Activated CD4-positive, alpha-beta memory T cell treated with anti-CD3 and anti-CD28 coated beads for 36 hours (primary cell): ENCODE measurements at regions of chr11 and their contacts with region 1.

Region 1: GRCh38 chr11:2444821-2445745 is at the start of gene KCNQ1:
- DNase-seq: peak; percentile 52
- H3K4me3 Mint-ChIP-seq: peak within 1 kb of the TSS; percentile 89
- H3K27ac Mint-ChIP-seq: peak within 1 kb of the TSS; percentile 4
- H3K4me1 Mint-ChIP-seq: peaks cover 33% of the 10 kb centered on the region
- H3K27me3 Mint-ChIP-seq: no peaks in the 10 kb centered on the region
- total RNA-seq, gene KCNQ1: 10.7 to 10.8 TPM

Region 2: DNA sequence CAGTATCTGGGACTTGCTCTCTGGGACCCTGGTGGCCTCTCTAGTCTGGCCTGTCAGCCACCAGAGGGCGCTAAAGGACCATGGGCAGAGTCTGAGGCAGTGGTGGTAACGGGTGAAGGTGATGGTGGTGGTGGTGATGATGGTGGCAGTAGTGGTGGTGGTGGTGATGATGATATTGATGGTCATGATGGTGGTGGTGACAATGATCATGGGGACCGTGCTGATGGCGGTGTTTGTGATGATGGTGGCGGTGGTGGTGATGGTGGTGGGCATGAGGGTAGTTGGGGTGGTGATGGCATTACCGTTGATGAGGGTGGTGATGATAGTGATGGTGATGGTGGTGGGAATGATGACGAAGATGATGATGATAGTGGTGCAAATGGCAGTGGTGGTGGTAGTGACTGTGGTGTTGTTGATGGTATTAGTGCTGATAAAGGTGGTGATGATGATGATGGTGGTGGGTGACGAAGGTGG is 16.7 kb before region 1 on chr11:
- CTCF ChIA-PET with region 1: no interaction called
- POLR2A ChIA-PET with region 1: no interaction called
- intact Hi-C with region 1: no loop called
- DNase-seq: peak; percentile 87
- H3K4me3 Mint-ChIP-seq: no peak overlapping the region
- H3K27ac Mint-ChIP-seq: no peak overlapping the region
- H3K4me1 Mint-ChIP-seq: no peaks in the 10 kb centered on the region
- H3K27me3 Mint-ChIP-seq: no peaks in the 10 kb centered on the region

Region 3: GRCh38 chr11:2480874-2481220 is 35.8 kb after region 1 on chr11:
- CTCF ChIA-PET with region 1: no interaction called
- POLR2A ChIA-PET with region 1: no interaction called
- intact Hi-C with region 1: loop called (anchors 5 kb)
- DNase-seq: peak; percentile 22
- H3K4me3 Mint-ChIP-seq: peak overlapping the region; percentile 5
- H3K27ac Mint-ChIP-seq: peak overlapping the region; percentile 61
- H3K4me1 Mint-ChIP-seq: peaks cover 18% of the 10 kb centered on the region
- H3K27me3 Mint-ChIP-seq: no peaks in the 10 kb centered on the region